Psoas muscle (tissue), 8 donors: ENCODE measurements at regions of chr21 and their contacts with region 1.

Region 1: DNA sequence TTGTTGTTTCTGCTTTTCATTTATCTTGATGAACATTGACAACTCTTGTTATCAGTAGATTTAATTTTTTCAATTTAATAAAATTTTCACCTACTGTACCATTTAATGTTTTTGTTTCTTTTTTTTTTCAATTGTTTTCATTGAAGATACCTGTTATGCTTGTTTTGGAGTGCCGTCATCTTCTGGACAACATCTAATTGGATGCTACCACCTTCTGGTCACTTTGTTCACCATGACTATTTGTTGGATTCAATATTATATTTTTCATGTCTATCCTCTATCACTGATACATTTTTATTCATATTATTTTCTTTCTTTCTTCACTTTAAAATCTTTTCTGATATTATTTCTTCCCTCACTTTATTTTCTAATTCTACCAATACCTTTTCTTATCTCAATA is 14.0 kb downstream of the KRTAP21-2 start:
- DNase-seq: no peak
- ATAC-seq: no peak
- H3K4me3 ChIP-seq: no peak overlapping the region
- H3K27ac ChIP-seq: no peak overlapping the region
- H3K4me1 ChIP-seq: no peaks in the 10 kb centered on the region
- H3K27me3 ChIP-seq: no peaks in the 10 kb centered on the region
- CTCF ChIP-seq: no peak

Region 2: GRCh38 chr21:30444204-30444603 is 288.8 kb before region 1 on chr21:
- intact Hi-C with region 1: loop called in 1 of 2 experiments (anchors 10 kb)
- DNase-seq: no peak
- ATAC-seq: peak in 2 of 4 donors; percentile 51 to 66
- H3K4me3 ChIP-seq: no peak overlapping the region
- H3K27ac ChIP-seq: no peak overlapping the region
- H3K4me1 ChIP-seq: no peaks in the 10 kb centered on the region
- H3K27me3 ChIP-seq: no peaks in the 10 kb centered on the region
- CTCF ChIP-seq: no peak

Region 3: GRCh38 chr21:30582870-30583269 is 150.2 kb before region 1 on chr21:
- intact Hi-C with region 1: no loop called
- DNase-seq: no peak
- ATAC-seq: no peak
- H3K4me3 ChIP-seq: no peak overlapping the region
- H3K27ac ChIP-seq: no peak overlapping the region
- H3K4me1 ChIP-seq: no peaks in the 10 kb centered on the region
- H3K27me3 ChIP-seq: no peaks in the 10 kb centered on the region
- CTCF ChIP-seq: no peak